ENCODE measurements at regions of chr9 and their contacts with region 1.

Region 1: GRCh38 chr9:111298731-111299598 is 31.1 kb downstream of the OR2K2 start:
- DNase-seq: peak; percentile 22
- ATAC-seq: peak; percentile 50; the same call in 1 of the 3 replicates
- H3K4me3 ChIP-seq: no peak overlapping the region
- H3K27ac ChIP-seq: no peak overlapping the region
- H3K4me1 ChIP-seq: no peaks in the 10 kb centered on the region
- H3K27me3 ChIP-seq: no peaks in the 10 kb centered on the region
- CTCF ChIP-seq: peak; percentile 72
- EP300 ChIP-seq: no peak
- POLR2A ChIP-seq: no peak
- RAD21 ChIP-seq: peak; percentile 53; the same call in 1 of the 2 replicates

Region 2: DNA sequence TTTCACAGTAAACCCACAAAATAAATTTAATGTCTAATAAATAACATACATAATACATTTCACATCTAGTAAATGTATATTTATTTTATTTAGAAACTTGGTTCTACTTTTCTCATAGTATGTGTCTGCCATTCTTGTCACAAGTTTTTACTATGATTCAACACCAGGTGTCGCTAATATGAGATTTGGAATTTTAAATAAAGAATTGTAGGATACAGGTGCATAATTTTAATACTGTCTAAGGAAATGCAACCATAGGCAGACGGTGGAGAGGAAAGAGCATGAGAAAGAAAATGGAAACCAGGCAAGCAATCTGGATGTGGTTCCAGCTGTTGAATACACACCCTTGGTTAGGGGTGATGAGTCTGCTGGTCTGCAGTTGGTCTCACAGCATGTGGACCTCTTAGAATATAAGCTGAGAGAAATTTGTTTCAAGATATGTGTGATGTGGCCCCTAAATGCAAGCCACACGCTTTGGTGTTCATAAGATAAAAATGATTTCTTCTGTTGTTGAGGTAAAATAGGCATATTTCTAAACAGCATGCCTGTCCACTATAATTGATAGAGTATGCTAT is 846.7 kb before region 1 on chr9:
- CTCF ChIA-PET with region 1: no interaction called
- POLR2A ChIA-PET with region 1: no interaction called
- in situ Hi-C with region 1: no loop called
- intact Hi-C with region 1: loop called (anchors 5 kb)
- DNase-seq: no peak
- ATAC-seq: no peak
- H3K4me3 ChIP-seq: no peak overlapping the region
- H3K27ac ChIP-seq: no peak overlapping the region
- H3K4me1 ChIP-seq: no peaks in the 10 kb centered on the region
- H3K27me3 ChIP-seq: no peaks in the 10 kb centered on the region; a peak in 1 of 5 replicates
- CTCF ChIP-seq: 0 out of 2 replicates have a peak, but pooled peaks have one; percentile 29
- EP300 ChIP-seq: no peak
- POLR2A ChIP-seq: no peak
- RAD21 ChIP-seq: no peak

Region 3: GRCh38 chr9:110638381-110638954 is 660.5 kb before region 1 on chr9:
- CTCF ChIA-PET with region 1: no interaction called
- POLR2A ChIA-PET with region 1: no interaction called
- in situ Hi-C with region 1: loop called (anchors 25 kb)
- intact Hi-C with region 1: loop called (anchors 1 kb)
- DNase-seq: no peak
- ATAC-seq: no peak
- H3K4me3 ChIP-seq: no peak overlapping the region
- H3K27ac ChIP-seq: no peak overlapping the region
- H3K4me1 ChIP-seq: no peaks in the 10 kb centered on the region
- H3K27me3 ChIP-seq: no peaks in the 10 kb centered on the region
- CTCF ChIP-seq: no peak
- EP300 ChIP-seq: no peak
- POLR2A ChIP-seq: no peak
- RAD21 ChIP-seq: no peak

Region 4: GRCh38 chr9:110874963-110875674 is 423.8 kb before region 1 on chr9:
- CTCF ChIA-PET with region 1: no interaction called
- POLR2A ChIA-PET with region 1: no interaction called
- in situ Hi-C with region 1: loop called (anchors 25 kb)
- intact Hi-C with region 1: no loop called
- DNase-seq: no peak
- ATAC-seq: peak; percentile 64
- H3K4me3 ChIP-seq: no peak overlapping the region
- H3K27ac ChIP-seq: no peak overlapping the region
- H3K4me1 ChIP-seq: no peaks in the 10 kb centered on the region
- H3K27me3 ChIP-seq: no peaks in the 10 kb centered on the region
- CTCF ChIP-seq: peak; percentile 31; the same call in 1 of the 2 replicates
- EP300 ChIP-seq: no peak
- POLR2A ChIP-seq: no peak
- RAD21 ChIP-seq: no peak

Region 5: GRCh38 chr9:111037381-111038305 is 261.3 kb before region 1 on chr9:
- CTCF ChIA-PET with region 1: no interaction called
- POLR2A ChIA-PET with region 1: no interaction called
- in situ Hi-C with region 1: no loop called
- intact Hi-C with region 1: loop called (anchors 5 kb)
- DNase-seq: peak; percentile 6
- ATAC-seq: peak; percentile 96
- H3K4me3 ChIP-seq: peak overlapping the region; percentile 32 to 69 (median 49); a peak in 5 of 6 replicates
- H3K27ac ChIP-seq: no peak overlapping the region
- H3K4me1 ChIP-seq: peaks cover 22% of the 10 kb centered on the region
- H3K27me3 ChIP-seq: peaks cover 7 to 44% of the 10 kb centered on the region in 2 experiments
- CTCF ChIP-seq: peak; percentile 56; the same call in 1 of the 2 replicates
- EP300 ChIP-seq: no peak
- POLR2A ChIP-seq: no peak
- RAD21 ChIP-seq: peak; percentile 69

Region 6: GRCh38 chr9:111108946-111109345 is 190.0 kb before region 1 on chr9:
- CTCF ChIA-PET with region 1: no interaction called
- POLR2A ChIA-PET with region 1: no interaction called
- in situ Hi-C with region 1: no loop called
- intact Hi-C with region 1: no loop called
- DNase-seq: no peak
- ATAC-seq: no peak
- H3K4me3 ChIP-seq: no peak overlapping the region
- H3K27ac ChIP-seq: no peak overlapping the region
- H3K4me1 ChIP-seq: no peaks in the 10 kb centered on the region
- H3K27me3 ChIP-seq: no peaks in the 10 kb centered on the region; a peak in 1 of 5 replicates
- CTCF ChIP-seq: no peak
- EP300 ChIP-seq: no peak
- POLR2A ChIP-seq: no peak
- RAD21 ChIP-seq: no peak

Region 7: DNA sequence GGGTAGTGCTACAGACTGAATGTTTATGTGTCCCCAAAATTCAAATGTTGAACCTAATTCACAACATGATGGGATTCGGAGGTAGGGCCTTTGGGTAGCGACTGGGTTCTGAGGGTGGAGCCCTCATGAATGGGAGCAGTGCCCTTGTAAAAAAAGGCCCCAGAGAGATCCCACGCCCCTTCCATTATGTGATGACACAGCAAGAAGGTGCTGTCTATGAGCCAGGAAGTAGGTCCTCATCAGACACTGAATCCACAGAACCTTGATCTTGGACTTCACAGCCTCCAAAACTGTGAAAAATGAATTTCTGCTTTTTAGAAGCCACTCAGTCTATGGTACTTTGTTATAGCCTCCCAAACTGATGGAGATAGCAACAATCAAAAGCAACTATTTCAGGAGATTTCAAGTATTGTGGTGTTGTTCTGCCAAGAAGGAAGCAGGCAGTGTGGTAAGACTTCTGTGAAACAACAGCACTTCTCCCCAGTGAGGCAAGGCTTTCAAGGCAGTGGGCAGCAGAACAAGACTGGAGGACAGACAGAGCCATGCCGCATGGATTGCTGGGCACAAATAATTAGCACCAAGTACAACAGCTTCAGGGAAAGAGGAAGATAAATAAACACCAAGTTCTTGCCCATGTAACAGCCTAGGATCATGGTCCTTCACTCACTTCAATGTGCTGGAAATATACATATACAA is 45.1 kb before region 1 on chr9:
- CTCF ChIA-PET with region 1: no interaction called
- POLR2A ChIA-PET with region 1: no interaction called
- in situ Hi-C with region 1: no loop called
- intact Hi-C with region 1: no loop called
- DNase-seq: no peak
- ATAC-seq: no peak
- H3K4me3 ChIP-seq: no peak overlapping the region
- H3K27ac ChIP-seq: no peak overlapping the region
- H3K4me1 ChIP-seq: no peaks in the 10 kb centered on the region
- H3K27me3 ChIP-seq: no peaks in the 10 kb centered on the region
- CTCF ChIP-seq: no peak
- EP300 ChIP-seq: no peak
- POLR2A ChIP-seq: no peak
- RAD21 ChIP-seq: no peak

Region 8: DNA sequence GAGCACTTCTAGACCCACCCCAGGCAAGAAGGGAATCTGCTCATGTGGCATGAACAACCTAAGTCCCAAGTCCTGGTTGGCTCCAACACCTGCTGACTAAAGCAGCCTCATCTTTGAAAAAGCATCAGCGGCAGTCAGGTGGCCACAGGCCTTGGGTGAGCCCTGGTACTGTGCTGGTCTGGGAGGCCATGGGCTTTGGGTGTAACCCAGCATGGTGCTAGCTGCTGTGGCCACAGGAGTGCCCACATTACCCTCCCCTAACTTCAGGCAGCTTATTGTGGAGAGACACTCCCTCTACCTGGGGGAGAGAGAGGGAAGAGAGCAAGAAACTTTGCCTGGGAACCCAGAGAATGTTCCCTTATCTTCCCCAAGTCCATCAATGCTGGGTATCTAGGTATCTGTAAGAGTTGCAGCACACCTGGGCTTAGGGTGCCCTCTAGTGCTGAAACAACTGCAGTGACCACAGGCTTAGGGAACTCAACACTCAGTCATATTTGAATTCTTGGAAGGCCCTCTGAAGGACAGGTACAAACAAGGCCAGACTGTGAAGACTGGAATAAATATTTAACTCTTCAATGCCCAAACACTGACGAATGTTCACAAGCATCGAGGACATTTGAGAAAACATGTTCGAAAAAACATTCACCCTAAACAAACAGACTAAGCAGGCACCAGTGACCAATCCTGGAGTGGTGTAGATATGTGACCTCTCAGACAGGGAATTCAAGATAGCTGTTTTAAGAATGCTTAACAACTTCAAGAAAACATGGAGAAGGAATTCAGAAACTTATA is 101.0 kb after region 1 on chr9:
- CTCF ChIA-PET with region 1: no interaction called
- POLR2A ChIA-PET with region 1: no interaction called
- in situ Hi-C with region 1: no loop called
- intact Hi-C with region 1: loop called (anchors 2 kb)
- DNase-seq: peak; percentile 54
- ATAC-seq: peak; percentile 98
- H3K4me3 ChIP-seq: no peak overlapping the region
- H3K27ac ChIP-seq: no peak overlapping the region
- H3K4me1 ChIP-seq: no peaks in the 10 kb centered on the region
- H3K27me3 ChIP-seq: no peaks in the 10 kb centered on the region
- CTCF ChIP-seq: peak; percentile 83
- EP300 ChIP-seq: no peak
- POLR2A ChIP-seq: no peak
- RAD21 ChIP-seq: peak; percentile 62